CD8-positive, alpha-beta T cell (primary cell): ENCODE measurements at regions of chr9 and their contacts with region 1.

Region 1: DNA sequence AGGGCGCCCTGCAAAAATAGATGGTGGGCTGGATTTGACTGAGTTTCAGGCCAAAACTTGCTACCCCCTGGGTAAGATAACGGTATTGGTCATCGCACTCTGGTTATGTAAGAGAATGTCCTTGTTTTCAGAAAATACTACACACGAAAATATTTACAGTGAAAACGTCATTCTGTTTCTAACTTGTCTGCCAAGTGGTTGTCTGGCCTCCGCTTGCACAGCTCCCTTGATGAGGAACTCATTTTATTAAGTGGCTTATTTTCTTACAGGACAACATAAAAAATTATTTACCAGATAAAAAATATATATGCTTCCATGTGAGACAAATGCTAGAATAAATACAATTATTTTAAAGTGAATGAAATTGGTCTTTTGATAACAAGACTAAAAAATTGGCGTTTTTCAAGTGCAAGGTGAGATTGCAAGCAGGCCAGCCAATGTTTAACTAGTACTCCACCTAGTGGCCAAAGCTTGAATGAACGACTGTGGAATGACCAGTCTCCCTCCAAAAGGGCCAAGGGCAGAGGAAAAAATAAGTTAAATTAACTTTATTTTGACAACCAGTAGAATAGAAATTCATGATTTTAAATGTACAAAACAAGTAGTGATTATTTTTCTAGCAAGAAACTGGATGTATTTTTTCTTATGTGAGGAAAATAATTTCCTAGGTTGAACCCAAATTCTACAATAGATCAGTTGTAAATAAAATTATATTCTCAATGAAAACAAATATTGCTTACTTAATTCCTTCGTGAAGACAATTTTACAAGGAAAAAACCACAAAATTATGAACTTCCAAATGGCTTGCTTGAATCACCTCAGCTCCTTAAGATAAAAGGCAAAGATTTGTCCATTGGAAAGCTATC is 93.2 kb downstream of the ZFAND5 start:
- DNase-seq: peak in 6 of 9 experiments; percentile 19 to 65 (median 48)
- ATAC-seq: peak; percentile 44
- H3K4me3 ChIP-seq: no peak overlapping the region
- H3K4me3 Mint-ChIP-seq: no peak overlapping the region
- H3K27ac ChIP-seq: no peak overlapping the region
- H3K27ac Mint-ChIP-seq: no peak overlapping the region
- H3K4me1 ChIP-seq: no peaks in the 10 kb centered on the region
- H3K4me1 Mint-ChIP-seq: no peaks in the 10 kb centered on the region
- H3K27me3 ChIP-seq: no peaks in the 10 kb centered on the region
- H3K27me3 Mint-ChIP-seq: peaks cover 2% of the 10 kb centered on the region
- CTCF ChIP-seq: peak; percentile 88

Region 2: GRCh38 chr9:71285191-71285656 is 986.6 kb before region 1 on chr9:
- CTCF ChIA-PET with region 1: interaction called, 14 read pairs
- POLR2A ChIA-PET with region 1: no interaction called
- intact Hi-C with region 1: loop called in 1 of 2 experiments (anchors 2 kb)
- DNase-seq: peak in 6 of 9 experiments; percentile 3 to 54 (median 27)
- ATAC-seq: peak; percentile 48
- H3K4me3 ChIP-seq: no peak overlapping the region
- H3K4me3 Mint-ChIP-seq: no peak overlapping the region
- H3K27ac ChIP-seq: no peak overlapping the region
- H3K27ac Mint-ChIP-seq: no peak overlapping the region
- H3K4me1 ChIP-seq: no peaks in the 10 kb centered on the region
- H3K4me1 Mint-ChIP-seq: no peaks in the 10 kb centered on the region
- H3K27me3 ChIP-seq: no peaks in the 10 kb centered on the region
- H3K27me3 Mint-ChIP-seq: peaks cover 11% of the 10 kb centered on the region
- CTCF ChIP-seq: peak; percentile 88

Region 3: DNA sequence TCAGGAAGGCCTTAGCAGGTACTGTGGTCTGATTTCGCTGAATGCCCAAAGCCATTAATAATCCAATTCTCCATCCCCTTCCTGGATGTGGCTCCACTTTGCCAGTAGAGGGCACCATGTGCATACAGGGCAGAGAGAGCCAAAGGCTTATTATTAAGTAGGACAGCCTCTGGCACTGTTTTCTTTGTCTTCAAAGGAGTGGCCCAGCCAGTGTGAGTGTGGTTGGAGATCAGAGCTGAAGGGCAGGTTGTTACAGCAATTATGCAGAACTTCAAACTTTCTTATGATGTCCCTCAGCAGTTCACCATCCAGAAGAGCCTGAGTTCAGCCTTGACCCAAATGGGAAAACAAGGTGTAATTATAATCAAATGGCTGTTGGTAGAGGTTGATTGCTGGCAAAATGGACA is 464.9 kb before region 1 on chr9:
- CTCF ChIA-PET with region 1: no interaction called
- POLR2A ChIA-PET with region 1: no interaction called
- intact Hi-C with region 1: loop called (anchors 1 to 5 kb)
- DNase-seq: peak; percentile 12 to 80 (median 62)
- ATAC-seq: peak; percentile 96
- H3K4me3 ChIP-seq: no peak overlapping the region
- H3K4me3 Mint-ChIP-seq: no peak overlapping the region
- H3K27ac ChIP-seq: no peak overlapping the region
- H3K27ac Mint-ChIP-seq: peak overlapping the region; percentile 27
- H3K4me1 ChIP-seq: peaks cover 6% of the 10 kb centered on the region
- H3K4me1 Mint-ChIP-seq: peaks cover 15% of the 10 kb centered on the region
- H3K27me3 ChIP-seq: no peaks in the 10 kb centered on the region
- H3K27me3 Mint-ChIP-seq: no peaks in the 10 kb centered on the region
- CTCF ChIP-seq: peak; percentile 91

Region 4: GRCh38 chr9:72025931-72026342 is 245.9 kb before region 1 on chr9:
- CTCF ChIA-PET with region 1: no interaction called
- POLR2A ChIA-PET with region 1: no interaction called
- intact Hi-C with region 1: no loop called
- DNase-seq: no peak
- ATAC-seq: no peak
- H3K4me3 ChIP-seq: no peak overlapping the region
- H3K4me3 Mint-ChIP-seq: no peak overlapping the region
- H3K27ac ChIP-seq: no peak overlapping the region
- H3K27ac Mint-ChIP-seq: no peak overlapping the region
- H3K4me1 ChIP-seq: no peaks in the 10 kb centered on the region
- H3K4me1 Mint-ChIP-seq: peaks cover 3% of the 10 kb centered on the region
- H3K27me3 ChIP-seq: no peaks in the 10 kb centered on the region
- H3K27me3 Mint-ChIP-seq: peaks cover 6% of the 10 kb centered on the region
- CTCF ChIP-seq: no peak

Region 5: GRCh38 chr9:72210522-72210921 is 61.3 kb before region 1 on chr9:
- CTCF ChIA-PET with region 1: no interaction called
- POLR2A ChIA-PET with region 1: no interaction called
- intact Hi-C with region 1: no loop called
- DNase-seq: no peak
- ATAC-seq: no peak
- H3K4me3 ChIP-seq: no peak overlapping the region
- H3K4me3 Mint-ChIP-seq: no peak overlapping the region
- H3K27ac ChIP-seq: no peak overlapping the region
- H3K27ac Mint-ChIP-seq: no peak overlapping the region
- H3K4me1 ChIP-seq: no peaks in the 10 kb centered on the region
- H3K4me1 Mint-ChIP-seq: no peaks in the 10 kb centered on the region
- H3K27me3 ChIP-seq: peaks cover 0 to 4% of the 10 kb centered on the region in 2 experiments
- H3K27me3 Mint-ChIP-seq: peaks cover 19% of the 10 kb centered on the region
- CTCF ChIP-seq: no peak

Region 6: DNA sequence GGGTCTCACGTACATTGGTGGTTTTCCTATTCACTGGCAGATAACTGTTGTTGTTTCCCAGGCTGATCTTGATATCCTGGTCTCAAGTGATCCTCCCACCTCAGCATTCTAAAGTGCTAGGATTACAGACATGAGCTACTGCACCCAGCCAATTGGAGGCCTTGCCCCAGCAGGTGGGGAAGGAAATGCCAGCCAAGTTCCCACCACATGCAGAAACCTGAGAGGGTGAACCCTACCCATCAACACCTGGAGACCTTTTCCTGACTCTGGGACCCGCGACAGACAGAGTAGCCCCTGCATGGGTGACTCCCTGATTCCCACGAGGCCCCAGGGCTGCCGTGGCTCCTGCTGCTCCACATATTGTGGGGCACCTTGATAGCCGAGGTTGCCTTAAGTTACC is 14.9 kb before region 1 on chr9:
- CTCF ChIA-PET with region 1: interaction called, 13 read pairs
- POLR2A ChIA-PET with region 1: no interaction called
- intact Hi-C with region 1: no loop called
- DNase-seq: no peak
- ATAC-seq: no peak
- H3K4me3 ChIP-seq: no peak overlapping the region
- H3K4me3 Mint-ChIP-seq: no peak overlapping the region
- H3K27ac ChIP-seq: no peak overlapping the region
- H3K27ac Mint-ChIP-seq: no peak overlapping the region
- H3K4me1 ChIP-seq: no peaks in the 10 kb centered on the region
- H3K4me1 Mint-ChIP-seq: no peaks in the 10 kb centered on the region
- H3K27me3 ChIP-seq: peaks cover 0 to 2% of the 10 kb centered on the region in 2 experiments
- H3K27me3 Mint-ChIP-seq: peaks cover 26% of the 10 kb centered on the region
- CTCF ChIP-seq: no peak

Region 7: GRCh38 chr9:72695365-72695764 is 423.5 kb after region 1 on chr9:
- CTCF ChIA-PET with region 1: no interaction called
- POLR2A ChIA-PET with region 1: no interaction called
- intact Hi-C with region 1: no loop called
- DNase-seq: no peak
- ATAC-seq: no peak
- H3K4me3 ChIP-seq: no peak overlapping the region
- H3K4me3 Mint-ChIP-seq: no peak overlapping the region
- H3K27ac ChIP-seq: no peak overlapping the region
- H3K27ac Mint-ChIP-seq: no peak overlapping the region
- H3K4me1 ChIP-seq: no peaks in the 10 kb centered on the region
- H3K4me1 Mint-ChIP-seq: no peaks in the 10 kb centered on the region
- H3K27me3 ChIP-seq: no peaks in the 10 kb centered on the region
- H3K27me3 Mint-ChIP-seq: peaks cover 2% of the 10 kb centered on the region
- CTCF ChIP-seq: no peak